CD8-positive, alpha-beta T cell (primary cell): ENCODE measurements at regions of chr3 and their contacts with region 1.

Region 1: DNA sequence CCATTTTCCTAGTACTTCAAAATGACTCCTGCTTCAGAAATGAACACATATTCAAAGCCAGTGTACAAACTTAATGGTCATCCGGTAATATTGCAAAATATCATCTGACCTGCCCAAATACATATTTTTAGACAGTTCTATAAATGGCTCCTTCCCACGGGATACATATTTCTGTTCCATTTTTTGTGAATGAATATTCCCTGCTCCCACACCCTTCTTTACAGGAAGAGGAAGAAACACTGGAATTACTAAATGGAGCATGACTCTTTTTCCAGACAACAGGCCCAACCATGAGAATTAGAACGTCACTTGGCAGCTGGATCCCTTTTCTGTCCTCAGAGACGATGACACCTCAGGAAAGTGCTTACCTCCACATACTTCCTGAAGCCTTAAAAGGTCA is 38.0 kb upstream of the CBLB start:
- DNase-seq: no peak
- ATAC-seq: no peak
- H3K4me3 ChIP-seq: no peak overlapping the region
- H3K4me3 Mint-ChIP-seq: no peak overlapping the region
- H3K27ac ChIP-seq: no peak overlapping the region
- H3K27ac Mint-ChIP-seq: no peak overlapping the region
- H3K4me1 ChIP-seq: peaks cover 6% of the 10 kb centered on the region
- H3K4me1 Mint-ChIP-seq: peaks cover 11% of the 10 kb centered on the region
- H3K27me3 ChIP-seq: no peaks in the 10 kb centered on the region
- H3K27me3 Mint-ChIP-seq: no peaks in the 10 kb centered on the region
- CTCF ChIP-seq: no peak

Region 2: GRCh38 chr3:105022813-105023212 is 884.0 kb before region 1 on chr3:
- CTCF ChIA-PET with region 1: no interaction called
- POLR2A ChIA-PET with region 1: no interaction called
- intact Hi-C with region 1: no loop called
- DNase-seq: no peak
- ATAC-seq: no peak
- H3K4me3 ChIP-seq: no peak overlapping the region
- H3K4me3 Mint-ChIP-seq: no peak overlapping the region
- H3K27ac ChIP-seq: no peak overlapping the region
- H3K27ac Mint-ChIP-seq: no peak overlapping the region
- H3K4me1 ChIP-seq: no peaks in the 10 kb centered on the region
- H3K4me1 Mint-ChIP-seq: no peaks in the 10 kb centered on the region
- H3K27me3 ChIP-seq: no peaks in the 10 kb centered on the region
- H3K27me3 Mint-ChIP-seq: no peaks in the 10 kb centered on the region
- CTCF ChIP-seq: no peak

Region 3: GRCh38 chr3:105458518-105459215 is 448.2 kb before region 1 on chr3:
- CTCF ChIA-PET with region 1: no interaction called
- POLR2A ChIA-PET with region 1: no interaction called
- intact Hi-C with region 1: no loop called
- DNase-seq: no peak
- ATAC-seq: no peak
- H3K4me3 ChIP-seq: no peak overlapping the region
- H3K4me3 Mint-ChIP-seq: no peak overlapping the region
- H3K27ac ChIP-seq: no peak overlapping the region
- H3K27ac Mint-ChIP-seq: no peak overlapping the region
- H3K4me1 ChIP-seq: no peaks in the 10 kb centered on the region
- H3K4me1 Mint-ChIP-seq: no peaks in the 10 kb centered on the region
- H3K27me3 ChIP-seq: no peaks in the 10 kb centered on the region
- H3K27me3 Mint-ChIP-seq: no peaks in the 10 kb centered on the region
- CTCF ChIP-seq: no peak

Region 4: DNA sequence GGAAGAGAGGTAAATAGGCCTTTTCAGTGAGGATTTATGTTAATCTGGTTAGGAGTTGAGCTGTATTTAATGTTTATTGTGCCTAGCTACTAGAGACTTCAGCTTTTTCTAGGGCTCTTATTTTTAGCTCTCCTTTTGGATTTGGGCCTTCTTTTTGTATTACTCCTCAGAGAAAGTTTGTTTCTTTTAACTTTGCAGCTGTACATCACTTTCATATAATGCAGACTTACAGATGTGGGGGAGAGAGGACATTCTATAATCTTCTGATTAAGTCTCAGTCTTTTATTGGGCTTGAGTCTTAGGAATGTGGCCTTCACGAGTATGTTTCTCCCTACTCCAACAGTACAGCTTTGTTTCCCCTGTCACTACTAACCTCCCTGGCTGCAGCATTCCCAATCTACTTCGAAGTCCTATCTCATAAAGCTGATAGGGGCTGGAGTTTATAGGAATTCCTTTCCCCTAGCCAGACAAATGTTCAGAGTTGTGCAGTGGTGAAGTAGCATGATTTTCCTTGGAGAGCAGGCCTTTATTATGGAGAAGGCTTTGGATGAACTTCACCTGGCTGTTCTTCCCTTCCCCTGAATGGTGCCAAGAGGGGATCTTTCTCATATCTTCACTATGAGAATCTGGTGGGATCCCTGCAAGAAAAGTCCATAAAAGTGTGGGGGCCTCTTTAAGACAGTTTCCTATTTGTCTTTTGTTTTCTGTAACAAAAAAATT is 44.2 kb after region 1 on chr3:
- CTCF ChIA-PET with region 1: no interaction called
- POLR2A ChIA-PET with region 1: no interaction called
- intact Hi-C with region 1: loop called in 1 of 2 experiments (anchors 5 kb)
- DNase-seq: no peak
- ATAC-seq: no peak
- H3K4me3 ChIP-seq: no peak overlapping the region
- H3K4me3 Mint-ChIP-seq: no peak overlapping the region
- H3K27ac ChIP-seq: no peak overlapping the region
- H3K27ac Mint-ChIP-seq: no peak overlapping the region
- H3K4me1 ChIP-seq: no peaks in the 10 kb centered on the region
- H3K4me1 Mint-ChIP-seq: peaks cover 2% of the 10 kb centered on the region
- H3K27me3 ChIP-seq: no peaks in the 10 kb centered on the region
- H3K27me3 Mint-ChIP-seq: no peaks in the 10 kb centered on the region
- CTCF ChIP-seq: no peak